Heart right ventricle (tissue), 16 donors: ENCODE measurements at regions of chr7 and their contacts with region 1.

Region 1: GRCh38 chr7:68063166-68063565 is 1066.5 kb downstream of the TYW1 start:
- DNase-seq: no peak
- ATAC-seq: peak in 1 of 8 donors; percentile 22
- H3K4me3 ChIP-seq: no peak overlapping the region
- H3K27ac ChIP-seq: no peak overlapping the region
- H3K4me1 ChIP-seq: no peaks in the 10 kb centered on the region
- H3K27me3 ChIP-seq: peaks cover 0 to 36% (median 10%) of the 10 kb centered on the region in 7 donors
- CTCF ChIP-seq: peak; percentile 7 to 55 (median 48)

Region 2: DNA sequence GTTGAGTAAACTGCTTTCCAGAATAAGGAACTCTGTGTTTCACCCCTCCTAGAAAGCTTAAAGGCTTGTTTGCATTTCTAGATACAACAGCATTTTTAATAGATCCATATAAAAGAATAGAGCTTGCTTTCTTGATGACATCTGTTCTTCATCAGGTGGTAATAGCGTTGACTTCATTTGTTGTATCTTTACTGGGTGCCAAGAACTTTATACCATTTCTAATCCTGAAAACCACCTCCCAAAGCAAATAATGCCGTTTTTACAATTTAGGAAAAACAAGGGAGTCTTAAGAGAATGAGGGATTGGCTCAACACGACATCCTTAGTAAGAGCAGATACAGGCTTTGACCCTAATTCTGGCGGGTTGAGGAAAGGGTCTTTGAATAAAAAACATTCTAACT is 73.2 kb before region 1 on chr7:
- intact Hi-C with region 1: no loop called
- DNase-seq: no peak
- ATAC-seq: no peak
- H3K4me3 ChIP-seq: no peak overlapping the region
- H3K27ac ChIP-seq: no peak overlapping the region
- H3K4me1 ChIP-seq: no peaks in the 10 kb centered on the region
- H3K27me3 ChIP-seq: peaks cover 0 to 25% (median 4%) of the 10 kb centered on the region in 7 donors
- CTCF ChIP-seq: no peak

Region 3: GRCh38 chr7:68020102-68020501 is 43.1 kb before region 1 on chr7:
- intact Hi-C with region 1: no loop called
- DNase-seq: no peak
- ATAC-seq: no peak
- H3K4me3 ChIP-seq: no peak overlapping the region
- H3K27ac ChIP-seq: no peak overlapping the region
- H3K4me1 ChIP-seq: no peaks in the 10 kb centered on the region
- H3K27me3 ChIP-seq: peaks cover 0 to 4% (median 0%) of the 10 kb centered on the region in 7 donors
- CTCF ChIP-seq: no peak

Region 4: GRCh38 chr7:69922026-69922803 is 1859.0 kb after region 1 on chr7:
- intact Hi-C with region 1: loop called in 1 of 10 experiments (anchors 10 kb)
- DNase-seq: no peak
- ATAC-seq: no peak
- H3K4me3 ChIP-seq: no peak overlapping the region
- H3K27ac ChIP-seq: no peak overlapping the region
- H3K4me1 ChIP-seq: no peaks in the 10 kb centered on the region
- H3K27me3 ChIP-seq: no peaks in the 10 kb centered on the region
- CTCF ChIP-seq: no peak